PC-9 (cell line): ENCODE measurements at regions of chr2 and their contacts with region 1.

Region 1: DNA sequence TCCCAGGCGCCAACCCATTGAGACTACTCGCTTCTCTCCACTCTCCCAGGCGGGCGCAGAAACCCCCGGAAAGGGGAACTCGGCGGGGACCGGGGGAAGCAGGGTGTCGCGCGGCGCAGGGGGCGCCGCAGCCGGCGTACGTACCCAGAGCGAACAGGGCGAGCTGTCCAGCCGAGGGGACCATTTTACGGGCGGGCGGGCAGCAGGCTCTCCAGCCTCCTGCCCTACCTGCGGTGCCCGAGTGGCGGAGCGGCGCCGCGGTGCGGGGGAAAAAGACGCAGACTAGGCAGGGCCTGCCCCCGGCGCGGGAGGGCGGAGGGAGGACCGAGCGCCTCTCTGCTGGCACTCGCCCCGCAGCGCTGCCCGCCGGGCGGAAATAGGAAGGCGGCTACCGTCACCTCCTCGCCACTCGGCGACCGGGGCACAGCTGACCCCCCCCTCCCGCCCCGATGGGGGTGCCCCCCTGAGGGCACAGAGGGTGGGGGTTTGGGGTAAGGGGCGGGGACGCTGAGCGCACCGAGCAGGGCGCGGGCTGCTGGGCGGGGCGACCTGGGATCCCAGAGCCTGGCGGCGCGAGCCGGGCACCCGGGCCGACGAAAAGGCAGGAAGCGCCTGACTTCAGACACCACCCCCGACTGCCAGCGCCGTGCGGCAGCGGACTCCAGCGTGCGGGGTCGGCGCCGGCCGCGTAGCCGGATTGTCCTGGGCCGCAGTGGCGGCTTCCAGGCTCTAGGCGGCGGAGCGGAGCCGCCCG is at the start of gene TGFA:
- DNase-seq: peak; percentile 83 to 98
- H3K4me3 ChIP-seq: peak within 1 kb of the TSS; percentile 99
- H3K27ac ChIP-seq: peak within 1 kb of the TSS; percentile 98
- H3K4me1 ChIP-seq: peaks cover 50% of the 10 kb centered on the region
- H3K27me3 ChIP-seq: no peaks in the 10 kb centered on the region
- CTCF ChIP-seq: peak; percentile 86
- total RNA-seq, gene TGFA: 27.7 and 36.4 TPM in 2 replicates

Region 2: DNA sequence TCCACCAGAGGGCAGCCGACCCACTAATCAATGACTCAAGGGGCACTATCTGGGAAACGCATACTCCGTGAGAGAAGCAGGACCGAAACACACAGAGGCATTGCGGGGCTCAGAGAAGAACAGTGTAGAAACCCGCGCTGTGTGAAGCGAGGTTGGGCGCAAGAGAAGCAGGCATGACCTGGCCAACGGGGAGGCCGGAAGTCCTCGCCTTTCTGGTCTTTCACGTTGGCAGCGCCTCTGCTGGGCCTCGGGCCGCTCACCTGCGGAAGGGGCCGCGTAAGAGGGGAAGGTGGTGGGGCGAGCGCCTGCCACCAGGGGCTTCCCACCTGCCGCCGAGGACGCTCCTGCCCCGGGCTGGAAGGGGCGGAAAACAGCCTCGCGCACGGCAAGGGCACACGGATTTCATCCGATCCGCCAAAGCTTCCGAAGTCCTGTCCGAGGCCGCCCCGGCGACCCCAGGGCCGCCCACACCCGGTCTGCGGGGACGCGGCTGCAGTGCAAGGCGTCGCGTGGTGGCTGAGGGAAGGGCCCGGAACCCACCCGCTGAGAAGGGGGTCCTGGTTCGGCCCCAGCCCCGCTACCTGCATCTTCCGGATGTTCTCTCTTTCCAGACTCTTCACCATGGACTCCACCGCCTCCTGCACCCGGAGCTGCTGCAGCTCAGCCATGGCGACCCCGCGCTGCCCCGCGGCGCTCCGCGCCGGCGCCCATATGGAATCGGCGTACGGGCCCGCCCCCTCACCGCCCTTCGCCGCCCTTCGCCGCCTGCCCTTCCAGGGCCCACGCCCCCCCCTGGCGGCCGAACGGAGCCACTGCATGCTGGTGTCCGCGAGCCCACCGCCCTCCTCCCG is 252.2 kb before region 1 on chr2 and contains the start of gene FAM136A:
- CTCF ChIA-PET with region 1: no interaction called
- POLR2A ChIA-PET with region 1: no interaction called
- intact Hi-C with region 1: loop called (anchors 5 kb)
- DNase-seq: peak; percentile 58 to 89
- H3K4me3 ChIP-seq: peak within 1 kb of the TSS; percentile 81
- H3K27ac ChIP-seq: peak within 1 kb of the TSS; percentile 70
- H3K4me1 ChIP-seq: no peaks in the 10 kb centered on the region; the same call in 1 of the 2 replicates
- H3K27me3 ChIP-seq: no peaks in the 10 kb centered on the region
- CTCF ChIP-seq: peak; percentile 90
- total RNA-seq, gene FAM136A: 38.5 and 39.3 TPM in 2 replicates

Region 3: GRCh38 chr2:70340921-70341765 is 212.6 kb before region 1 on chr2:
- CTCF ChIA-PET with region 1: no interaction called
- POLR2A ChIA-PET with region 1: interaction called, 3 read pairs
- intact Hi-C with region 1: loop called (anchors 1 kb)
- DNase-seq: peak; percentile 65 to 70
- H3K4me3 ChIP-seq: no peak overlapping the region
- H3K27ac ChIP-seq: no peak overlapping the region
- H3K4me1 ChIP-seq: peaks cover 17% of the 10 kb centered on the region
- H3K27me3 ChIP-seq: no peaks in the 10 kb centered on the region
- CTCF ChIP-seq: peak; percentile 90

Region 4: DNA sequence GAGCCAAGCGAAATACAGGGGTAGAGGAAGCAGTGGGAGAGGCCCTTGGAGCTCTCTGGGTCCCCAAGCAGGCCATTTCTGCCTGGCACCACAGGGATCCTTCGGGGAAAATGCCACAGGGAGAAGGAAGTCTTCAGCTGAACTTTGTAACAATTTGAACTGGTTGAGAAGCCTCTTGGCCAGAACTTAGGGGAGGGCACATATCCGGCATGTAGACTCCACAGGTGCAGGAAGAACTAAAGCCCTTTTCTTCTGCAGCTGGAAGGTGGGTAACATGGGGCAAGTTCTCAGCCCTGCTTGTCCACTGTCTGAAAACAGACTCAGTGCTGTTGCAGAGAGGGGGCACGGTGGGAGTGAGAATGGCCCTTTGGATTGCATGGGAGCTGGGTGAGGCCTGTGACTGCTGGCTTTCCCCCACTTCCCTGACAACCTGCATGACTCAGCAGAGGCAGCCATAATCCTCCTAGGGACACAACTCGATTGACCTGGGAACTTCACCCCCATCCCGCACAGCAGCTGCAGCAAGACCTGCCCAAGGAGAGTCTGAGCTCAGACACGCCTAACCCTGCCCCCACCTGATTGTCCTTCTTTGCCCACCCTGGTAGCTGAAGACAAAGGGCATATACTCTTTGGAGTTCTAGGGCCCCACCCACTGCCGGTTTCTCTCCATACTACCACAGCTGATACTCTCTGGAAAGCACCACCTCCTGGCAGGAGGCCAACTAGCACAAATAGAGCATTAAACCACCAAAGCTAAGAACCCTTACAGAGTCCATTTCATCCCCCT is 150.3 kb before region 1 on chr2:
- CTCF ChIA-PET with region 1: no interaction called
- POLR2A ChIA-PET with region 1: interaction called, 3 read pairs
- intact Hi-C with region 1: loop called (anchors 5 kb)
- DNase-seq: peak; percentile 73 to 85
- H3K4me3 ChIP-seq: peak overlapping the region; percentile 59
- H3K27ac ChIP-seq: peak overlapping the region; percentile 96
- H3K4me1 ChIP-seq: peaks cover 43% of the 10 kb centered on the region
- H3K27me3 ChIP-seq: no peaks in the 10 kb centered on the region
- CTCF ChIP-seq: no peak

Region 5: DNA sequence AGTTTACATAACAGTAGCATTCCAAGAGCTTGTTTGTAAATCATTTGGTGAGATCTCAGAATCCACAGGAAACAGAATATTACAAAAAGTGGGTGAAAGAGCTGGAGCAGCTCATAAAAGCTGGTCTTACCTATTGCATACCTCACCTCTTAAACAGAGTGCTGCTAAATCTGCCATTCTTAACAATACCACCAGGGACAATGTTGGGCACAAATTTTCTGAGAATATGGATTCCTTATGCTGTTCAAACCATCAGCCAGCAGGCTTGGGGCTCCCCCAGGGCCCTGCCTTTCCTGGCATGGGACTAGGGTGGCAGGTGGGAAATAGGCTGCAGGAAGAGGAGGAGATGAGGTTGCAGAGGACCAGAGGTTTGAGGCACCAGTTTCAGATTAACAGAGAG is 55.7 kb before region 1 on chr2:
- CTCF ChIA-PET with region 1: interaction called, 3 read pairs
- POLR2A ChIA-PET with region 1: interaction called, 5 read pairs
- intact Hi-C with region 1: loop called (anchors 1 kb)
- DNase-seq: peak in 1 of 2 experiments; percentile 75
- H3K4me3 ChIP-seq: no peak overlapping the region
- H3K27ac ChIP-seq: peak overlapping the region; percentile 48
- H3K4me1 ChIP-seq: peaks cover 31% of the 10 kb centered on the region
- H3K27me3 ChIP-seq: no peaks in the 10 kb centered on the region
- CTCF ChIP-seq: peak; percentile 71

Region 6: DNA sequence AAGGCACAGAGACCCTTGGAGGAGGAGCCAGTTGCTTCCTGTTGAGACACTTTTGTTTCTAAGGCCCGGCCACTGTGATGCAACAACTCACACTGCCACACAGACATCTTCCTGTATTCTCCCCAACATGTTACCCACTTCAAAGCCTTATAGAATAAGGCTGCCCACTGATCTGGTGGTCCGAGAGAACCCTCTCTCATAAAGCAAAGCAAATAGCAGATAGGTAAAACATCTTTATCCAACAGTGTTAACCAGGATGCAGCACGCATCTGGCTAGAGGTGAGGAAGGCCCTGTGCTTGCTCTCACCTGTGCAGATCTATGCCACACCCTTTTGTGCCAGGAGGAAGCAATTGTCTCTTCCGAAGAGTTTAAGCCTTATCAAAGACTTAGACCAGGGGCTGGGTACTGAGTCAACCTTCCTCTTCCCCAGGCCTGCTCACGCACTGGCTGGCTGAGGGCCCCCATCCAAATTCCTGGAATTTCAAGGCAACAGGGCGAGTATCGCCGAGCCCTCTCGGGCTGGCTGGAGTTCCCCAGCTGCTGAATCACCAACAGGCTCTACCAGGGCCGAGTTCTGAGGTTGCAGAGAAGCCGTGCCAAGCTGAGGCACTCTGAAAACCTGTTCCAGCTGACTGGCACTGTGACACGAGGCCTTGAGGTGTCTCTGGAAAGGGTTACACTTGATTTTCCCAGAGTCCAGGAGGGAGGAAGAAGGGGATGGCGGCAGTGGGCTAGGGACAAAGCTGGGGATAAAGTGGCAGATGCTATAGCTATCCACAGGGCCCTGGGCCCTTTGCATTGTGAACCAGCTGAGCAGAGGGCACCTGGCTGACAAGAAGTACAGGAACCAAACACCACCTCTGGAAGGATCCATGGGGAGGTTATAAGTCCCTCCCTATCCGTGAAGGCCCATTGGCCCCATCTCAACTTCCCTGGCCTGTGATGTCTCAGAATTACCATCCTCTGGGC is 29.5 kb before region 1 on chr2:
- CTCF ChIA-PET with region 1: no interaction called
- POLR2A ChIA-PET with region 1: interaction called, 4 read pairs
- intact Hi-C with region 1: loop called (anchors 1 kb)
- DNase-seq: peak; percentile 96 to 98
- H3K4me3 ChIP-seq: peak overlapping the region; percentile 41; the same call in 1 of the 2 replicates
- H3K27ac ChIP-seq: peak overlapping the region; percentile 100
- H3K4me1 ChIP-seq: peaks cover 74% of the 10 kb centered on the region
- H3K27me3 ChIP-seq: no peaks in the 10 kb centered on the region
- CTCF ChIP-seq: no peak

Region 7: DNA sequence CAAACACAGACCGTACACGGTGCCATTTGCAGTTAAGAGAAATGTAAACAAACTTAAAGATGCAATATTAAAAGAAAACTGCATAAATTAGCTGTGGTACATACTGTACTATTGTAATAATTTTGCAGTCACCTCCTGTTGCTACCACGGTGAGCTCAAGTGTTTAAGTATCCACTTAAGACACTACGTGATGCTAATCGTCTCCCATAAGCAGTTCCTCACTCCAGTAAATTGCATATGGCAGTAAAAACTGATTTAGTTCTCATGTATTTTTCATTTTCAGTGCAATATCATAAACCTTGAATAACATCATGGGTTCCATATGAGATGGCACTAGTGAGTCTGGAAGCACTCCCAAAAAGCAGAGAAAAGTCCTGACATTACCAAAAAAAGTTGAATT is 252.3 kb after region 1 on chr2:
- CTCF ChIA-PET with region 1: no interaction called
- POLR2A ChIA-PET with region 1: no interaction called
- intact Hi-C with region 1: no loop called
- DNase-seq: no peak
- H3K4me3 ChIP-seq: no peak overlapping the region
- H3K27ac ChIP-seq: no peak overlapping the region
- H3K4me1 ChIP-seq: no peaks in the 10 kb centered on the region
- H3K27me3 ChIP-seq: peaks cover 52% of the 10 kb centered on the region
- CTCF ChIP-seq: no peak